Mammary epithelial cell (primary cell): ENCODE measurements at regions of chr1 and their contacts with region 1.

Region 1: GRCh38 chr1:6438047-6438525 is 13.5 kb downstream of the ESPN start:
- DNase-seq: peak; percentile 58
- H3K4me3 ChIP-seq: no peak overlapping the region
- H3K27ac ChIP-seq: no peak overlapping the region
- H3K4me1 ChIP-seq: peaks cover 4% of the 10 kb centered on the region
- H3K27me3 ChIP-seq: no peaks in the 10 kb centered on the region
- CTCF ChIP-seq: peak; percentile 90 to 96

Region 2: GRCh38 chr1:6052543-6053205 is 385.4 kb before region 1 on chr1:
- CTCF ChIA-PET with region 1: interaction called, 12 read pairs
- dilution Hi-C with region 1: no loop called
- in situ Hi-C with region 1: no loop called
- intact Hi-C with region 1: no loop called
- DNase-seq: peak; percentile 46
- H3K4me3 ChIP-seq: no peak overlapping the region
- H3K27ac ChIP-seq: no peak overlapping the region
- H3K4me1 ChIP-seq: no peaks in the 10 kb centered on the region
- H3K27me3 ChIP-seq: no peaks in the 10 kb centered on the region
- CTCF ChIP-seq: peak; percentile 57 to 64

Region 3: GRCh38 chr1:6350416-6351088 is 87.5 kb before region 1 on chr1:
- CTCF ChIA-PET with region 1: no interaction called
- dilution Hi-C with region 1: no loop called
- in situ Hi-C with region 1: loop called in 1 of 2 experiments (anchors 5 kb)
- intact Hi-C with region 1: loop called (anchors 2 kb)
- DNase-seq: peak; percentile 90
- H3K4me3 ChIP-seq: no peak overlapping the region
- H3K27ac ChIP-seq: peak overlapping the region; percentile 25
- H3K4me1 ChIP-seq: peaks cover 81% of the 10 kb centered on the region
- H3K27me3 ChIP-seq: no peaks in the 10 kb centered on the region
- CTCF ChIP-seq: no peak

Region 4: GRCh38 chr1:6393400-6394187 is 44.5 kb before region 1 on chr1 and contains the start of gene ACOT7:
- CTCF ChIA-PET with region 1: no interaction called
- dilution Hi-C with region 1: no loop called
- in situ Hi-C with region 1: no loop called
- intact Hi-C with region 1: loop called (anchors 5 kb)
- DNase-seq: peak; percentile 92
- H3K4me3 ChIP-seq: peak within 1 kb of the TSS; percentile 67 to 73 (median 73)
- H3K27ac ChIP-seq: peak within 1 kb of the TSS; percentile 64
- H3K4me1 ChIP-seq: peaks cover 27% of the 10 kb centered on the region
- H3K27me3 ChIP-seq: no peaks in the 10 kb centered on the region
- CTCF ChIP-seq: peak in 1 of 2 donors; percentile 49
- total RNA-seq, gene ACOT7: 67.2 to 193 TPM

Region 5: GRCh38 chr1:6409053-6409452 is 29.0 kb before region 1 on chr1:
- CTCF ChIA-PET with region 1: interaction called, 22 read pairs
- dilution Hi-C with region 1: no loop called
- in situ Hi-C with region 1: no loop called
- intact Hi-C with region 1: loop called (anchors 1 kb)
- DNase-seq: no peak
- H3K4me3 ChIP-seq: no peak overlapping the region
- H3K27ac ChIP-seq: no peak overlapping the region
- H3K4me1 ChIP-seq: peaks cover 8% of the 10 kb centered on the region
- H3K27me3 ChIP-seq: no peaks in the 10 kb centered on the region
- CTCF ChIP-seq: peak in 1 of 2 donors; percentile 13

Region 6: DNA sequence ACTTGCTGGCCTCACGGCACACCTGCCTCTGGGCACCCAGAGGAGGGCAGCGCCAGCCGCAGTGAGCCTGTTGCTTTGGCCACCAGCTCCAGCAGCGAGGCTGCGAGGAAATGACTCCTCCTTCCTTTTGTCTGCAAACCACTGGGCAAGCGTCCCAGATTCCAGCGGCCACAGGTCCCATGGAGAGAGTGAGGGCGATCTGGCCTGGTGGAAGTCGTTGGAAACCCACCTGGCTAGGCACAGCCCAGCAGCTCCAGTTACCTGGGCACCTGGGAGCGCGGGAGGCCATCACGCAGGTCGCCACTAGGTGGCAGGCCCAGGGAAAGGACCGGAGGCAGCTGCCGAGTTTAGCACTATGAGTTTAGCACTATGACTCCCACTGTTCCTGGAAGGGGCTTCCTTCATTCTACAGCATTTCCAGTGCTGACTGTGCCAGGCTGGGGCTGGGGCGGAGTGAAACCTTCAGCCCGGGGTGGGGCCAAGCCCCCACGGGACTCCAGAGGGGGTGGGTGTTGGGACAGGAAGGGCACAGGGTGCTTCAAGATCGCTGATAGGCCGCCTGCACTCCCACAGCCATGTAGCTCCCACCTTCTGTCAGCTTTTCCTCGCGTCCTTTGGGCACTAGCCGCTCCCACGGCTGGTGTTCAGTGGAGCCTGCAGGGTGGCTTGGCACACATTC is 14.6 kb before region 1 on chr1:
- CTCF ChIA-PET with region 1: interaction called, 12 read pairs
- dilution Hi-C with region 1: no loop called
- in situ Hi-C with region 1: no loop called
- intact Hi-C with region 1: loop called (anchors 1 kb)
- DNase-seq: peak; percentile 91
- H3K4me3 ChIP-seq: no peak overlapping the region
- H3K27ac ChIP-seq: peak overlapping the region; percentile 46
- H3K4me1 ChIP-seq: peaks cover 75% of the 10 kb centered on the region
- H3K27me3 ChIP-seq: no peaks in the 10 kb centered on the region
- CTCF ChIP-seq: peak; percentile 96 to 97

Region 7: DNA sequence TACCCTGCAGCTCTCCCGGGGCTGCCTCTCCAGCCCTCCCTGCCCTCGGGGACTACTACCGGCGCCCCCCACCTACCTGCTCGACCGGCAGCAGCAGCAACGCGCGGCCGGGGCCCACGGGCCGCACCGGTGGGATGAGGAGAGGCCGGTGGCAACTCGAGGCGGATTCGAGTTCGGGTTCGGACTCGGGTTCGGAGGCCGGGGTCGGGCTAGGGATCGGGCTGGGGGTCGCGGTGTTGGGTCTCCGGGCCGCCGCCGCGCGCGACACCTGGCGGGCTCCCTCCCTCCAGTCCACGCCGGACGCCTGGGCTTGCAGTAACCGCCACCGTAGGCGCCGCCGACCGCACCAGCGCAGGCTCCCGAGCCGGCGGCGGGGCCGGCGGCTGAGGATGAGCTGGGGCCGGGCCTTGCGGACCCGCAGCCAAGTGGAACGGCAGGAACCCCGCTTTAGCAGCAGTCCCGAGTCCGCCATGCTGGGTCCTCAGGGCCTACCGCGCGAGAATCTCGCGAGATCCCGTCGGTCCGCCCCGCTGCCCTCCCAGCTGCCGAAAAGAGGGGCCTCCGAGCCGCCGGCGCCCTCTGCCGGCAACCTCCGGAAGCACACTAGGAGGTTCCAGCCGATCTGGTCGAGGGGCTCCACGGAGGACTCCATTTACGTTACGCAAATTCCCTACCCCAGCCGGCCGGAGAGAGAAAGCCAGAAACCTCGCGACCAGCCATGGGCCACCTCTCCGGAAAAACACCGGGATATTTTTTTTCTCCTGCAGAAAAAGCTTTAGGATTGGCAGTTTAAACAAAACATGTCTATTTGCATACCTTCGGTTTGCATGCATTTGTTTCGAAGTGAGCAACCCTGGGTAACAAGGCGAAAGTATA is 116.2 kb after region 1 on chr1 and contains the start of gene NOL9:
- CTCF ChIA-PET with region 1: no interaction called
- dilution Hi-C with region 1: no loop called
- in situ Hi-C with region 1: no loop called
- intact Hi-C with region 1: no loop called
- DNase-seq: peak; percentile 83
- H3K4me3 ChIP-seq: peak within 1 kb of the TSS; percentile 96 to 100 (median 97)
- H3K27ac ChIP-seq: peak within 1 kb of the TSS; percentile 75
- H3K4me1 ChIP-seq: peaks cover 14% of the 10 kb centered on the region
- H3K27me3 ChIP-seq: no peaks in the 10 kb centered on the region
- CTCF ChIP-seq: peak; percentile 68 to 92
- total RNA-seq, gene NOL9: 25.5 to 36.4 TPM